ENCODE measurements at regions of chr5 and their contacts with region 1.

Region 1: DNA sequence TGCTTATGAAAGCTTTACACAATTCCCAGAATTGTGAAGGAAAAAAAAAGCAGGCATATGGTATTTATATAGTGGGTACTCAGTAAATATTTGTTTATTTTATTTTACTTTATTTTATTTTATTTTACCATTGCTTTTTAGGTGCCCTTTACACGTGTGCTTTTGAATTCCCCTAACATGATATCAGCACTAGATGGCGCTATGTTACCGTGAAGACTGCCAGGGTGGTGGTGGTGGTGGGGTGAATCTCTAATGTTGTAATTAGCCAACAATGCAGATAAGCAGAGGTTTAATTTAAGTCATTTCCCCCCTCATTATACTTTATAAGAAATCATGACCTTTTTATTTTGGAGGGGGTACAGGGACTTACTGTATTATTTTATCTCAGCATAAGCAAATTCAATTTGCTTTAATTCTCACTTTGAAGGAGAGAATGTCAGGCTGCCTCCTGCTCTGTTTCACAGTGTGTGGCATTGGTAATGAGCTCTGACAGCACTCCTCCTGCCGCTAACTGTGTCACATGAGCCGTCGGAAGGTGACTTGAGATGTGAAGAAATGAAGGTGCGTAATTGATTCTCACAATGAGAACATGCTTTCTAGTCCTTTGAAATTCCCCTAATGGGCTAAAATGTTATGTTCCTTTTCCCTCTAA is 165.6 kb downstream of the YTHDC2 start:
- DNase-seq: peak in 1 of 2 experiments; percentile 46
- H3K4me3 ChIP-seq: no peak overlapping the region
- H3K4me3 Mint-ChIP-seq: no peak overlapping the region
- H3K27ac Mint-ChIP-seq: no peak overlapping the region
- H3K4me1 ChIP-seq: no peaks in the 10 kb centered on the region
- H3K4me1 Mint-ChIP-seq: no peaks in the 10 kb centered on the region
- H3K27me3 ChIP-seq: no peaks in the 10 kb centered on the region
- H3K27me3 Mint-ChIP-seq: peaks cover 3% of the 10 kb centered on the region
- CTCF ChIP-seq: peak; percentile 62 to 73

Region 2: GRCh38 chr5:113692891-113693457 is 13.9 kb after region 1 on chr5:
- CTCF ChIA-PET with region 1: no interaction called
- POLR2A ChIA-PET with region 1: no interaction called
- intact Hi-C with region 1: no loop called
- DNase-seq: no peak
- H3K4me3 ChIP-seq: no peak overlapping the region
- H3K4me3 Mint-ChIP-seq: no peak overlapping the region
- H3K27ac Mint-ChIP-seq: no peak overlapping the region
- H3K4me1 ChIP-seq: no peaks in the 10 kb centered on the region
- H3K4me1 Mint-ChIP-seq: no peaks in the 10 kb centered on the region
- H3K27me3 ChIP-seq: no peaks in the 10 kb centered on the region
- H3K27me3 Mint-ChIP-seq: peaks cover 15% of the 10 kb centered on the region
- CTCF ChIP-seq: no peak

Region 3: GRCh38 chr5:113806250-113806649 is 127.2 kb after region 1 on chr5:
- CTCF ChIA-PET with region 1: no interaction called
- POLR2A ChIA-PET with region 1: no interaction called
- intact Hi-C with region 1: loop called (anchors 10 kb)
- DNase-seq: no peak
- H3K4me3 ChIP-seq: no peak overlapping the region
- H3K4me3 Mint-ChIP-seq: no peak overlapping the region
- H3K27ac Mint-ChIP-seq: no peak overlapping the region
- H3K4me1 ChIP-seq: no peaks in the 10 kb centered on the region
- H3K4me1 Mint-ChIP-seq: no peaks in the 10 kb centered on the region
- H3K27me3 ChIP-seq: no peaks in the 10 kb centered on the region
- H3K27me3 Mint-ChIP-seq: peaks cover 3% of the 10 kb centered on the region
- CTCF ChIP-seq: peak in 1 of 2 experiments; percentile 8

Region 4: GRCh38 chr5:114305402-114306211 is 626.6 kb after region 1 on chr5:
- CTCF ChIA-PET with region 1: no interaction called
- POLR2A ChIA-PET with region 1: no interaction called
- intact Hi-C with region 1: loop called (anchors 1 kb)
- DNase-seq: peak in 1 of 2 experiments; percentile 2
- H3K4me3 ChIP-seq: no peak overlapping the region
- H3K4me3 Mint-ChIP-seq: no peak overlapping the region
- H3K27ac Mint-ChIP-seq: no peak overlapping the region
- H3K4me1 ChIP-seq: no peaks in the 10 kb centered on the region
- H3K4me1 Mint-ChIP-seq: no peaks in the 10 kb centered on the region
- H3K27me3 ChIP-seq: no peaks in the 10 kb centered on the region
- H3K27me3 Mint-ChIP-seq: peaks cover 6% of the 10 kb centered on the region
- CTCF ChIP-seq: peak; percentile 1 to 30

Region 5: GRCh38 chr5:114789773-114790402 is 1110.8 kb after region 1 on chr5:
- CTCF ChIA-PET with region 1: no interaction called
- POLR2A ChIA-PET with region 1: no interaction called
- intact Hi-C with region 1: loop called (anchors 1 kb)
- DNase-seq: peak in 1 of 2 experiments; percentile 20
- H3K4me3 ChIP-seq: no peak overlapping the region
- H3K4me3 Mint-ChIP-seq: no peak overlapping the region
- H3K27ac Mint-ChIP-seq: no peak overlapping the region
- H3K4me1 ChIP-seq: peaks cover 4% of the 10 kb centered on the region; the same call in 1 of the 2 replicates
- H3K4me1 Mint-ChIP-seq: peaks cover 7% of the 10 kb centered on the region
- H3K27me3 ChIP-seq: no peaks in the 10 kb centered on the region
- H3K27me3 Mint-ChIP-seq: peaks cover 3% of the 10 kb centered on the region
- CTCF ChIP-seq: peak in 1 of 2 experiments; percentile 57

Measured in Caco-2 (cell line).